GM10248 (cell line): ENCODE measurements at regions of chr18 and their contacts with region 1.

Region 1: GRCh38 chr18:21191596-21192307 is 50.3 kb upstream of the GREB1L start:
- DNase-seq: no peak
- CTCF ChIP-seq: peak; percentile 40

Region 2: GRCh38 chr18:21179590-21180220 is 12.0 kb before region 1 on chr18:
- CTCF ChIA-PET with region 1: interaction called, 57 read pairs
- POLR2A ChIA-PET with region 1: no interaction called
- DNase-seq: peak; percentile 63
- CTCF ChIP-seq: peak; percentile 77

Region 3: DNA sequence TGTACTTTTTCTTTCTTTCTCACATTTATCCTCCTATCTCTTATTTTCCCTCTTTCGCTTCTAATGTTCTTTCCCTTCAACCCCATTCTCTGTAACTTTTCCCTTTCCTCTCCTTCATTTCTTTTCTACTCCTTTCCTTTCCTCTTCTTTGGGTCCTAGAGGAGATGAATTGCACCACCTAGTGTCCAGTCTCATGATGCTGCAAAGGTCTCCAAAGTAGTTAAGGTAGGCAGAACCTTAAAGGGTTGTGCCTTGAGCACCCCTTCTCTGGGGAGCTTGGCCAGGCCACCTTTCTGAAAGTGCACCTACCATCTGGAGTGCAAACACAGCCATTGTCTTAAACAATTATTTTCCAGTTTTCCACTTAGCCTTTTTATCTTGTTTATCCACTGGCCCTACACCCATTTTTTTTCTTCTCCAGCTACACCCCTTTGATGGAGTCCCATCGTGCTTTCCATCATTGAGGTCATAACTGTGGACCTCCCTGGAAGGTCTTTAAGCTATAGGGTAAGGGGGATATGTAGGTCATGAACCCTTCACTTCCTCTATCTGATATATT is 252.8 kb after region 1 on chr18:
- CTCF ChIA-PET with region 1: interaction called, 55 read pairs
- POLR2A ChIA-PET with region 1: no interaction called
- DNase-seq: peak; percentile 54
- CTCF ChIP-seq: peak; percentile 70

Region 4: GRCh38 chr18:21955757-21956652 is 764.3 kb after region 1 on chr18:
- CTCF ChIA-PET with region 1: interaction called, 12 read pairs
- POLR2A ChIA-PET with region 1: no interaction called
- DNase-seq: peak; percentile 70
- CTCF ChIP-seq: peak; percentile 93